T-cell (primary cell): ENCODE measurements at regions of chr5 and their contacts with region 1.

Region 1: DNA sequence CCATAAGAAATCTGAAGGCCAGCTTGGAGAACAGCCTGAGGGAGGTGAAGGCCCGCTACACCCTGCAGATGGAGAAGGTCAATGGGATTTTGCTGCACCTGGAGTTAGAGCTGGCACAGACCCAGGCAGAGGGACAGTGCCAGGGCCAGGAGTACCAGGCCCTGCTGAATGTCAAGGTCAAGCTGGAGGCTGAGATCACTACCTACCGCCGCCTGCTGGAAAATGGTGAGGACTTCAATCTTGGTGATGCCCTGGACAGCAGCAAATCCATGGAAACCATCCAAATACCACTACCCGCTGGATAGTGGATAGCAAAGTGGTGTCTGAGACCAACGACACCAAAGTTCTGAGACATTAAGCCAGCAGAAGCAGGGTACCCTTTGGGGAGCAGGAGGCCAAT is 100.5 kb upstream of the MAN2A1 start:
- DNase-seq: no peak
- ATAC-seq: no peak
- H3K4me3 ChIP-seq: no peak overlapping the region
- H3K4me3 Mint-ChIP-seq: no peak overlapping the region
- H3K27ac ChIP-seq: no peak overlapping the region
- H3K27ac Mint-ChIP-seq: no peak overlapping the region
- H3K4me1 ChIP-seq: peaks cover 0 to 8% of the 10 kb centered on the region in 2 experiments
- H3K4me1 Mint-ChIP-seq: peaks cover 4 to 11% (median 5%) of the 10 kb centered on the region in 3 donors
- H3K27me3 ChIP-seq: peaks cover 0 to 3% of the 10 kb centered on the region in 2 experiments
- H3K27me3 Mint-ChIP-seq: peaks cover 0 to 1% of the 10 kb centered on the region in 2 donors

Region 2: GRCh38 chr5:109907731-109908130 is 318.5 kb after region 1 on chr5:
- CTCF ChIA-PET with region 1: no interaction called
- POLR2A ChIA-PET with region 1: no interaction called
- DNase-seq: no peak
- ATAC-seq: no peak
- H3K4me3 ChIP-seq: no peak overlapping the region
- H3K4me3 Mint-ChIP-seq: no peak overlapping the region
- H3K27ac ChIP-seq: no peak overlapping the region
- H3K27ac Mint-ChIP-seq: no peak overlapping the region
- H3K4me1 ChIP-seq: peaks cover 0 to 6% of the 10 kb centered on the region in 2 experiments
- H3K4me1 Mint-ChIP-seq: peaks cover 8 to 23% (median 10%) of the 10 kb centered on the region in 3 donors
- H3K27me3 ChIP-seq: no peaks in the 10 kb centered on the region
- H3K27me3 Mint-ChIP-seq: no peaks in the 10 kb centered on the region

Region 3: DNA sequence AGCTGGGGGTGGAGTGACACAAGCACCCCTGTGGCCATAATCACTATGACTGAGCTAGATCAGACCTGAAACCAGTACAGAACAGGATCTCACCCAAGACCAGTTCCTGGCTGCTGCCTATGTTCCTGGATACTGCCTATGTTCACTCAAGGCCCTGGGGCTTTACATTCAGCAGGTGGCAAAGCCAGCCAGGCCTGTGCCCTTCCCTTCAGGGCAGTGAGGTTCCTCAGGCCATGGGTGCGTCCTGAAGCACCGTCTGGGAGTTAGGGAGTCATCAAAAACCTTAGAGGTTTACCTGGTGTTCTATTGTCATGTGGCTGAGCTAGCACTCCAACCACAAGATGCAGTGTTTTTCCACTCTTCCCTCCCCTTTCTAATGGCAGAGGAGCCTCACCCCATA is 717.4 kb after region 1 on chr5:
- CTCF ChIA-PET with region 1: no interaction called
- POLR2A ChIA-PET with region 1: interaction called in 1 of 2 experiments, 11 read pairs
- DNase-seq: no peak
- ATAC-seq: no peak
- H3K4me3 ChIP-seq: no peak overlapping the region
- H3K4me3 Mint-ChIP-seq: no peak overlapping the region
- H3K27ac ChIP-seq: no peak overlapping the region
- H3K27ac Mint-ChIP-seq: no peak overlapping the region
- H3K4me1 ChIP-seq: no peaks in the 10 kb centered on the region
- H3K4me1 Mint-ChIP-seq: no peaks in the 10 kb centered on the region
- H3K27me3 ChIP-seq: peaks cover 0 to 7% of the 10 kb centered on the region in 2 experiments
- H3K27me3 Mint-ChIP-seq: peaks cover 0 to 5% of the 10 kb centered on the region in 2 donors